Vagina (tissue), 2 donors: ENCODE measurements at regions of chr1 and their contacts with region 1.

Region 1: GRCh38 chr1:201538612-201539551 is at the start of gene NAV1:
- DNase-seq: no peak
- H3K4me3 ChIP-seq: peak within 1 kb of the TSS; percentile 56 to 64
- H3K27ac ChIP-seq: peak within 1 kb of the TSS; percentile 90
- H3K4me1 ChIP-seq: peaks cover 76% of the 10 kb centered on the region
- H3K27me3 ChIP-seq: no peaks in the 10 kb centered on the region
- CTCF ChIP-seq: no peak
- POLR2A ChIP-seq: peak; percentile 24 to 66
- total RNA-seq, gene NAV1: 45.9 TPM

Region 2: DNA sequence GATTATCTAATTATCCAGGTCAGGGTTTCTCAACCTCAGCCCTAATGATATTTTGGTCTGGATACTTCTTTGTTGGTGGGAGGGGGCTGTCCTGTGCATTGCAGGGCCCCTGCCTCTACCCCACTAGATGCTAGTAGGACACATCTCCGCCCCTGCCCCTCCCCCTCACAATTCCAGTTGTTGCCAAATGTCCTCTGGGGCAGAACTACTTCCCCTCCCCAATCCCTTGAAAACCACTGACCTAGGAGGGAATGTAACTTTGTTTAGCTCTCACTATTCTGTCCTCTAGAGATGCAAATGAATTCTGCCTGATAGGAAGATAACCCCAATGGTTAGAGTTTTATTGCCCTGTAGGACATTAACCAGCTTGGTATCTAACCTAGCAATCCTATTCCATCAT is 434.7 kb before region 1 on chr1:
- intact Hi-C with region 1: no loop called
- DNase-seq: no peak
- H3K4me3 ChIP-seq: no peak overlapping the region
- H3K27ac ChIP-seq: no peak overlapping the region
- H3K4me1 ChIP-seq: peaks cover 5% of the 10 kb centered on the region
- H3K27me3 ChIP-seq: no peaks in the 10 kb centered on the region
- CTCF ChIP-seq: no peak
- POLR2A ChIP-seq: no peak

Region 3: DNA sequence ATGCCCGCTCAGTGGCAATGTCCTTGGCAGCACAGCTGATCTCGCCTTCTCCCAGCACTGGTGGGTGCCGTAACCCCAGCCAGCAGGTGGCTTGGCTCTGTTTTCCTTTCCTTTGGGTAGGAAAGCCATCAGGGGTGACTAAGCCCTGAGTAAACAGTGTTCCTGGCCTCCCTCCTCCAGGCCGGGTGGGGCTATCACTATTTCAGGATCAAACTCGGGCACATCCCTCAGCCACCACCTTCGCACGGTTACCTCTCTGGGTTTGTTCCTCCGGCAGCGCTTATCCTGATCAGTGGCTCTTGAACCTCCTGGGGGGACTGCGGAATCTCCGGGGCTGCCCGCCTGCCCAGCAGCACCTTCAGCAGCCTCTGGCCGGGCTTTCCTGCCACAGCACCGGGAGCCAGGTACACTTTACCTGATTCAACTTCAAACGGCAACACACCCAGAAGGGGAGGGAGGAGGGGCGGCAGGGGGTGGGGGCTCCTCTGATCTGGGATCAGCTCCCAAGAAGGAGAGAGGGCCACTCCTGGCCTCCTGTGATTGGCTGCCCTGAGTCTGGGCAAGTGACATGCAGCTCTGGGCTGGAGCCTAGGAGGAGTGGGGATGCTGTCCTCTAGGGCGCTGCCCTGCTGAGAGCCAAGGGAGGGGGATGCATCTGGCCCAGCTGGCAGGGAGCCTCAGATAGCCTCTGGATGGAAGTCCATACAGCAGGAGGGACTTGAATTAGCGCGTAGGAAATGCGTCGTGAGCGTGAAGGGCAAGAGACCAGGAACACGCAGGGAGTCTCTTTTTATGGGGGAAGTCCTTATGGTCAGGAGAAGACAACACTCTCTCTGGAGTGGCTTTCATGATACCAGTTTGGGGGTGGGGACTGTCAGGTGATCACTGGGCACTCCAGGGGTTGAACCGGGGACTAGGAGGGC is 411.8 kb before region 1 on chr1 and contains the start of gene ASCL5:
- intact Hi-C with region 1: no loop called
- DNase-seq: no peak
- H3K4me3 ChIP-seq: no peak within 1 kb of the TSS
- H3K27ac ChIP-seq: no peak within 1 kb of the TSS
- H3K4me1 ChIP-seq: no peaks in the 10 kb centered on the region
- H3K27me3 ChIP-seq: no peaks in the 10 kb centered on the region
- CTCF ChIP-seq: no peak
- POLR2A ChIP-seq: no peak
- total RNA-seq, gene ASCL5: not detected

Region 4: GRCh38 chr1:201447911-201448871 is 90.7 kb before region 1 on chr1:
- intact Hi-C with region 1: no loop called
- DNase-seq: no peak
- H3K4me3 ChIP-seq: no peak overlapping the region
- H3K27ac ChIP-seq: peak overlapping the region; percentile 36
- H3K4me1 ChIP-seq: peaks cover 37% of the 10 kb centered on the region
- H3K27me3 ChIP-seq: no peaks in the 10 kb centered on the region
- CTCF ChIP-seq: peak; percentile 77 to 86 (median 79)
- POLR2A ChIP-seq: no peak

Region 5: DNA sequence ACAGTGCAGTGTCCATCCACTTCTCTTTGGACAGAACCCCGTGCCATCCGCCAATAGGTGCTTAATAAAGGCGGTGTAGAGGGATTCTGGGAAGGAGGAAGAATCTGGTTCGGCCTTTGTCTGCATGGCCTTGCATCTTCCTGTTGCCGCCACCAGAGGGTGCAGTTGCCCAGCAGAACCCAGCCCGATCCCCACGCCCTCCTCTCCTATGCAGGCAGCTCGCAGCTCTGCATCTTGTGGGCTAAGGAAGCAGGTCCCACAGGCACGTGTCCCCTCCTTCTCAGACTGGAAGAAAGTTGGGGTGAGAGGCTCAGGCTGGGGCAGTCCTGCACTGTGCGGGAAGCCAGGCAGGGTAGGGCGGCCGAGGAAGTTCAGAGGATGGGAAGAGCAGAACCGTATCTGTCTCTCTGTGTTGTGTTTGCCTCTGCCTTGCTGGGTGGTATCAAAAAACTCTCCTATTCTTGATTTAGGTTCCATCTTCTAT is 20.8 kb after region 1 on chr1:
- intact Hi-C with region 1: no loop called
- DNase-seq: no peak
- H3K4me3 ChIP-seq: no peak overlapping the region
- H3K27ac ChIP-seq: peak overlapping the region; percentile 6
- H3K4me1 ChIP-seq: peaks cover 54% of the 10 kb centered on the region
- H3K27me3 ChIP-seq: no peaks in the 10 kb centered on the region
- CTCF ChIP-seq: peak; percentile 97 to 98 (median 98)
- POLR2A ChIP-seq: no peak

Region 6: DNA sequence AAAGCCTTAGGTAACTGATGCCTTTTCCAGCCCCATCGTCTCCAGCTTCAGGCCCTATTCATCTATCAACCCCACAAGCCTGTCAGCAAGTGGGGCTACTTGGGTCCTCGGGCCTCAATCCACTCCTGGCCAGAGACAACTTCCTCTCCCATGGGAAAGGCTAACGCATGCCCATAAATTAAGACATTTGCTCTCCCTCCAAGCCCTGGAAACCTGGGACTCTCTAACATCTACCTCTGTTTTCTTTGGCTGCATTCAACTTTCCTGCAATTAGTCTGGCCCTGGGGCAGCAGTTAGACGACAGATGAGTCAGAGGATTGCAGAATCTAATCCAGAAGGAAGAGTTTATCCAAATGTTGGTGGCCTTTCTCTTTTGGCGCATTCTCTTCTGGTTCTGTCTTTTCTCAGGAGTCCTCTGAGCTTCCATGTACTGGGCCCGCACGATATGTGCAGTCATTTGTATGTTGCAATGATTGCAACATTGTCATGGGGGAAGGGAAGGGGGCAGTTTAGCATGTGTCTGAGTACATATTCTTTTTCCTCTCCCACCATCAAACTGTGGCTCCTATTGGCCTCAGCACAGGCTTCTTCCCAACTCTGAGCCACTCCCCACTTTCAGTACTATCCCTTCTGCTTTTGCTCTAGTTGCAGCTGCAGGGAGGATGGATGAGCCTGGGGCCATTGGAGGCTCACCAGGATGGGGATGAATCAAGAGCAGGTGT is 54.5 kb after region 1 on chr1:
- intact Hi-C with region 1: loop called (anchors 5 kb)
- DNase-seq: peak in 1 of 2 donors; percentile 98
- H3K4me3 ChIP-seq: no peak overlapping the region
- H3K27ac ChIP-seq: peak overlapping the region; percentile 64
- H3K4me1 ChIP-seq: peaks cover 40% of the 10 kb centered on the region
- H3K27me3 ChIP-seq: no peaks in the 10 kb centered on the region
- CTCF ChIP-seq: no peak
- POLR2A ChIP-seq: no peak